ENCODE measurements at regions of chr20 and their contacts with region 1.

Region 1: DNA sequence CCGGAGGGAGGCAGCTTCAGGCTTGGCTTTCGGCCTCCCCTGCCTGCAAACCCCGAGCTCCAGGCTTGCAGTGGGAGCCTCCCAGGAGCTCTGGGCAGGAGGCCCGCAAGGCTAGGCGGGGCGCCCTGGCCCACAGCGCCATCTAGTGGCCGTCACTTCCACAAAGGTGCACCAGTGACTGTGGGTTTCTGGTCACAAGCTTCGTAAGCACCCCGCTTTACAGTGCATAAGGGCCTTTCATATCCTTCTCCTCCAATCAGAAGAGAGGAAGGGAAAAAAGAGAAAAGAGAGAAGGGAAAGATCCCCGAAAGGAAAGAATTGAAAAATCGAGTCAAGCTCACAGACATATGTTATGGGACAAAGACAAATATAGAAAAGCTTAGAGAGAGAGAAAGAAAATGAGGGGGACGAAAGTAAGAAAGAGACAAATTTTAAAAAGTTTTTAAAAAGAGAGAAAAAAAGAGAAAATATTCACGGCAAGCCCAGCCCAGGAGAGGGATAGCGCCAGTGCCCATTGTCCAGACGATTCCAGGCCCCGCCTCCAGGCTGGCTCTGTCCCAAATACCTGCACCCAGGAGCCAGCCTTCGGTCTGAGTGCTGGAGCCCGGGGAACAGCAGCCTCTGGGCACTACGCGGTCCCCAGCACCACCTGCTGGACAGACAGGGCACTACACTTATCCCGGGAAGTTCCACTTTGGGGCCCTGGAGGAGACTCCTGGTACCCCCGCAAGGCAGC is 207.1 kb downstream of the PREX1 start:
- DNase-seq: peak; percentile 95 to 96
- H3K4me3 ChIP-seq: peak overlapping the region; percentile 54
- H3K27ac ChIP-seq: peak overlapping the region; percentile 94
- H3K4me1 ChIP-seq: peaks cover 38% of the 10 kb centered on the region
- H3K27me3 ChIP-seq: no peaks in the 10 kb centered on the region
- CTCF ChIP-seq: peak; percentile 90

Region 2: GRCh38 chr20:47272893-47273590 is 1347.6 kb before region 1 on chr20:
- CTCF ChIA-PET with region 1: interaction called, 3 read pairs
- POLR2A ChIA-PET with region 1: no interaction called
- intact Hi-C with region 1: loop called (anchors 2 kb)
- DNase-seq: peak; percentile 53 to 58
- H3K4me3 ChIP-seq: no peak overlapping the region
- H3K27ac ChIP-seq: no peak overlapping the region
- H3K4me1 ChIP-seq: peaks cover 40% of the 10 kb centered on the region
- H3K27me3 ChIP-seq: no peaks in the 10 kb centered on the region
- CTCF ChIP-seq: peak; percentile 97

Region 3: GRCh38 chr20:47725248-47725973 is 895.3 kb before region 1 on chr20:
- CTCF ChIA-PET with region 1: no interaction called
- POLR2A ChIA-PET with region 1: no interaction called
- intact Hi-C with region 1: loop called (anchors 1 kb)
- DNase-seq: peak; percentile 84 to 86
- H3K4me3 ChIP-seq: no peak overlapping the region
- H3K27ac ChIP-seq: no peak overlapping the region
- H3K4me1 ChIP-seq: 0 out of 2 replicates have a peak, but pooled peaks cover 4% of the 10 kb centered on the region
- H3K27me3 ChIP-seq: no peaks in the 10 kb centered on the region
- CTCF ChIP-seq: peak; percentile 99

Region 4: GRCh38 chr20:47973519-47974233 is 647.0 kb before region 1 on chr20:
- CTCF ChIA-PET with region 1: interaction called, 10 read pairs
- POLR2A ChIA-PET with region 1: interaction called, 3 read pairs
- intact Hi-C with region 1: loop called (anchors 1 kb)
- DNase-seq: peak; percentile 86 to 95
- H3K4me3 ChIP-seq: peak overlapping the region; percentile 68
- H3K27ac ChIP-seq: peak overlapping the region; percentile 100
- H3K4me1 ChIP-seq: peaks cover 60% of the 10 kb centered on the region
- H3K27me3 ChIP-seq: no peaks in the 10 kb centered on the region
- CTCF ChIP-seq: no peak

Region 5: DNA sequence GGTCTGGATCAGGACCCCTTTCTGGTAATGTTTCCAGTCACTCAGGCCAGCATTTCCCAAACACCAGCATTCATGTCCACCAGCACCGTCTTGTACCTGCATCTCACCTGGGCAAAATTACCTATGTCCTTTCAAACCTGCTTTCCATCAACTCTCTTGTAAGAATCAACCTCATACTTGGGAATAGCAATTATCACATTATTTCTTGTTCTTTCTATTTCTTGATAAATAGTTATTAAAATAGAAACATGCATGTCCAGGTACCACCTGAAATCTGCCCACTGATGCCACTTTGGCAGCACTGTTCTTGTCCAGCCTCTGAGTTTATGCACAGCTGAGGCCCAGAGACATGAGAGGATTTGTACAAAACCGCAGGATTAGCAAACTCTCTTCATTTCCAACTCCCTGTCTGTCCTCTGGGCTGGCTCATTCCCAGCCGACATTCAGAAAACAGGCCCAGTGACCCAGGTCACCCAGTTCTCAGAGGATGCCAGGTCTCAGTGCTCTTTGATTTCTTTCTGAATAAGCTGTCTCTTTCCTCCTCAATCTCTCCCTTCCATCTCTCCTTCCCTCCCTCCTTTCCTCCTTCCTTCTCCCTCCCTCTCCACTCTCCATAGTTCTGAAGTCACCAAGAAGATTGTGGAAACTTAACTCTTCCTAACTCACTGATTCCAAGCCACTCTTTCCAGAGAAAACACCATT is 462.8 kb before region 1 on chr20:
- CTCF ChIA-PET with region 1: interaction called, 3 read pairs
- POLR2A ChIA-PET with region 1: no interaction called
- intact Hi-C with region 1: loop called (anchors 2 kb)
- DNase-seq: peak; percentile 42 to 53
- H3K4me3 ChIP-seq: no peak overlapping the region
- H3K27ac ChIP-seq: peak overlapping the region; percentile 89
- H3K4me1 ChIP-seq: peaks cover 45% of the 10 kb centered on the region
- H3K27me3 ChIP-seq: no peaks in the 10 kb centered on the region
- CTCF ChIP-seq: no peak

Region 6: DNA sequence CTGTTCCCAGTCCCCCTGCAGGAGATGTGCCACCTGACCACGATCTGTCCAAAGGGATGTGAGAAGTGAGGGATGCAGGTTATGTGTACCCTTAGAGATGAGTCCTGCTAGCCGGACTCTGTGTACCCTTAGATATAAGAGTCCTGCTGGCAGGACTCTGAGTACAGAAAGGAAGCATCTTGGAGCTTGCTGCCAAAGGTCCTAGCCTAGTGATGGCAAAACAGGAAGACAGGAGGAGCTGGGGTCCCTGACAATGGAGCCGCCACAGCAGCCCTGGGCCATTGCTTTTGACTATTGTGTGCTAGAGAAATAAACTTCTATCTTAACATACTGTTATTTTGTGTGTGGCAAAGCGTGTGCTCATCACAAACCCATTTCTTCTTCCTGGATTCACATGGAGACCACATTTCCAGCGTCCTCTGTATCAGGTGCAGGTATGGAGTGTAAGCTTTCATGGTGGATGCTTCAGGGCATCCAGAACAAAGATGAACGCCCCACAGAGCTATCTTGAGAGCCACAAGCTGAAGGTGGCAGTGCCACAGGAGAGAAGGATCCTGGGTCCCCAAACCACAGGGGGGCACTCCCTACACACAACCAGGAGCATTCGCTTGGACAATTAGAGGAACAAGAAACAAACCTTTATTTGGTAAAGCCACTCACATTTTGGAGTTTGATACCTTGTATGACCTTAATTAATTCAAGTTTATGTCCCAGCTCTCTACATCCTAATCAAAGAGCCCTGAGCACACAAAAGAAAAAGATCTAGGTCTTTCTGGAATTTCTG is 199.3 kb before region 1 on chr20:
- CTCF ChIA-PET with region 1: interaction called, 12 read pairs
- POLR2A ChIA-PET with region 1: no interaction called
- intact Hi-C with region 1: loop called (anchors 1 kb)
- DNase-seq: peak in 1 of 2 experiments; percentile 38
- H3K4me3 ChIP-seq: no peak overlapping the region
- H3K27ac ChIP-seq: no peak overlapping the region
- H3K4me1 ChIP-seq: no peaks in the 10 kb centered on the region
- H3K27me3 ChIP-seq: no peaks in the 10 kb centered on the region
- CTCF ChIP-seq: peak; percentile 55

Region 7: DNA sequence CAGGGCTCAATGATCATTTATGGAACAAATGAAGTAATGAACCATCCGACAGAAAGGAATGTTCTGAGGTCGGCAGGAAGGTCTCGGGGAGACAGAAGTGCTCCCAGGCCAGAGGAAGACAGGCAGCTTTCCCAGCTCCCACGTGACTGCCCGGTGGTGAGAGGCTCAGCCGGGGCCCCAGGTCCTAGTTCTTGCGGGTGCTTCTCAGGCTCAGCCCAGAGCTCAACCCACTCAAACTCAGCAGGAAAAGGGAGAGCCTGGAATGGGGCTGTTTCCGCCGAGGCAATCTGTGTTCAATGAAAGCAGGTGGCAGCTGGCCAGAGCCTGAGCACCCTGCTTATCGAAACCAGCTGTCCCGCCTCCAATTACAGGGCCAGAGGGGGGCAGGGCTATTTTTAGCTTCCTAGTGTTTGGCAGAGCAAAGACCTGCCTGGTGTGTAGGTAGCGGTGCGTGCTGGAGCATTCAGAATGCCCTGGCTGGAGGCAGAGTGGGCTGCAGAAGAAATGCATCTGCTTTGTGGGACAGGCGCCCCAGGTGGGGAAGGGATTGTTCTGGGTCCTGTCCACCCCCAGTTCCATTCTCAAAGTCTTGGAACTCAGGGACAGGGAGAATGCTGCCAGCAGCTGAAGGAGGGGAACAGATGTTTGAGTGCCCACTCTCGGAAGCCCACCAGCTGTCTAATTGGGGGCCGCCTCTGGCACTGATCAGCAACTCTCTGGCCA is 62.0 kb after region 1 on chr20:
- CTCF ChIA-PET with region 1: no interaction called
- POLR2A ChIA-PET with region 1: no interaction called
- intact Hi-C with region 1: no loop called
- DNase-seq: peak; percentile 72 to 75
- H3K4me3 ChIP-seq: peak overlapping the region; percentile 16; the same call in 1 of the 2 replicates
- H3K27ac ChIP-seq: no peak overlapping the region
- H3K4me1 ChIP-seq: peaks cover 46% of the 10 kb centered on the region
- H3K27me3 ChIP-seq: no peaks in the 10 kb centered on the region
- CTCF ChIP-seq: no peak

Region 8: GRCh38 chr20:48769069-48769879 is 148.6 kb after region 1 on chr20:
- CTCF ChIA-PET with region 1: no interaction called
- POLR2A ChIA-PET with region 1: no interaction called
- intact Hi-C with region 1: no loop called
- DNase-seq: no peak
- H3K4me3 ChIP-seq: no peak overlapping the region
- H3K27ac ChIP-seq: no peak overlapping the region
- H3K4me1 ChIP-seq: no peaks in the 10 kb centered on the region
- H3K27me3 ChIP-seq: no peaks in the 10 kb centered on the region
- CTCF ChIP-seq: no peak

Region 9: DNA sequence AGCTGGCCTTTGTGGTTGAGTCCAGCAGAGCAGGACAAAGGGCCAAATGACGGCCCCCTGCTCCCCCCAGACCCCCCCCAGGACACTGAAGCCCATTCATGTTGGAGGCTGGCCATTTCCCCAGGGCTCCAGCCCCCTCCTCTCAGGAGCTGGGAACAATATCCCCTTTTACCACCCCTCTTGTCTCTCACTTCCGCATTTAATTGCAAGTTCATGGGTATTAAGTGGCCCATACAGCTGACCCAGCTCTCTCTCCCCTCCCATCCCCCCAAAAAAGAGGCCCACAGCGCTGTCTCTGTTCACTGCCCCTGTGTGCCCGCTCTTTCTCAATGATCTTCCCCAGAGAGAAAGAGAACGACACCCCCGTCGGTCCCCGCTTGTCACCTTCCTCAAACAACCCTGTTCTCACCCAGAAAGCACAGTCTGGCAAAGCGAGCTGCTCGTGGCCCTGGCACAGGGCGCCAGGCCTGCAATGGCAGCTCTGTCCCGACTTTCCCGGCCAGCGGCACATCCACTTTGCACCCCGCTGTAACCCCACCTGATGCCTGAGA is 176.7 kb after region 1 on chr20:
- CTCF ChIA-PET with region 1: no interaction called
- POLR2A ChIA-PET with region 1: no interaction called
- intact Hi-C with region 1: no loop called
- DNase-seq: no peak
- H3K4me3 ChIP-seq: no peak overlapping the region
- H3K27ac ChIP-seq: no peak overlapping the region
- H3K4me1 ChIP-seq: no peaks in the 10 kb centered on the region
- H3K27me3 ChIP-seq: no peaks in the 10 kb centered on the region
- CTCF ChIP-seq: no peak